RWPE1 (cell line): ENCODE measurements at regions of chr5 and their contacts with region 1.

Region 1: DNA sequence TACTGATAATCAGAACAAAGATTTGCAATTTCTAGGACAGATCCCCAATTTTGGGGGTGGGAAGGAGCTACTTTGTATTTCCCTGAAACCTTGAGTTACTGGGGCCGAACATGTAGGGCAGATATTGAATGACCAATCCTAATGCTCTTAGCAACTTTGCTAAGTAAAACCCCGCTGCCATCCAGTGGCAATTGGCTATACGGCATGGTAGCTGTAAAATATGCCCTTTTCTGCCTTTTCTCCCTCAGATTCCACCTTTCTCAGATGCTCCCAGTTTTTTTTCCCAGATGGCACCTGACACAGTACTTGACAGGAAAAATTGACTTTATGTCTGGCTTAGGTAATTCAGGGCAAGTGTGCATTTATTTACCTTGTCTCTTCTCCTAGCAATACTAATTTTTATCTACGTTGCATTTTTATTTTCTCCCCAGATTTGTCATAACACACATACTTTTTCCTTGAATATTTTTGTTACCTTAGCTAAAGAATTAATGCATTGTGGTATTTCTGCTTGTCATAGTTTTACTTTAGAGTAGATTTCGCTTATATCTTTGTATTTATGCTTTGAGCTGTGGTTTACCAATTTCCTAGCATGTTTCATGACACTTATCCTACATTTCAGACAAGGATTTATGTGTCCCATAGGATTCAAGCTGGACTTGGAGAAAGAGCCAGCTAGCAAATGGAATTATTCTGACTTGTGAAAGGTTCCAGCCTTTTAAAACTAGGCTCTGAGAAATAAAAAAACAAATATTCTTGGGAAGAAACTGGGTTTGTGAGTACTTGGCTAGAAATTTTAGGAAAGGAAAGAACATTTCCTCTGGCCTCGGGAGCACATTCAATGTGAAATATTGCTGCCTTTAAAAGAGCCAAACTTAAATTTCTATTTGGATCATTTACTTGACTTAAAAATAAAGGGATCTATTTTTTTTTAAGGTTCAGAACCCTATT is 37.4 kb downstream of the PIK3R1 start:
- DNase-seq: peak; percentile 86
- H3K27ac ChIP-seq: no peak overlapping the region
- CTCF ChIP-seq: peak; percentile 77

Region 2: GRCh38 chr5:67246108-67246507 is 1006.8 kb before region 1 on chr5:
- CTCF ChIA-PET with region 1: interaction called, 38 read pairs
- POLR2A ChIA-PET with region 1: interaction called, 3 read pairs
- DNase-seq: peak; percentile 55
- H3K27ac ChIP-seq: no peak overlapping the region
- CTCF ChIP-seq: peak; percentile 84

Region 3: GRCh38 chr5:67493676-67494075 is 759.3 kb before region 1 on chr5:
- CTCF ChIA-PET with region 1: interaction called, 13 read pairs
- POLR2A ChIA-PET with region 1: no interaction called
- DNase-seq: peak; percentile 22
- H3K27ac ChIP-seq: no peak overlapping the region
- CTCF ChIP-seq: no peak